ENCODE measurements at regions of chr1 and their contacts with region 1.

Region 1: DNA sequence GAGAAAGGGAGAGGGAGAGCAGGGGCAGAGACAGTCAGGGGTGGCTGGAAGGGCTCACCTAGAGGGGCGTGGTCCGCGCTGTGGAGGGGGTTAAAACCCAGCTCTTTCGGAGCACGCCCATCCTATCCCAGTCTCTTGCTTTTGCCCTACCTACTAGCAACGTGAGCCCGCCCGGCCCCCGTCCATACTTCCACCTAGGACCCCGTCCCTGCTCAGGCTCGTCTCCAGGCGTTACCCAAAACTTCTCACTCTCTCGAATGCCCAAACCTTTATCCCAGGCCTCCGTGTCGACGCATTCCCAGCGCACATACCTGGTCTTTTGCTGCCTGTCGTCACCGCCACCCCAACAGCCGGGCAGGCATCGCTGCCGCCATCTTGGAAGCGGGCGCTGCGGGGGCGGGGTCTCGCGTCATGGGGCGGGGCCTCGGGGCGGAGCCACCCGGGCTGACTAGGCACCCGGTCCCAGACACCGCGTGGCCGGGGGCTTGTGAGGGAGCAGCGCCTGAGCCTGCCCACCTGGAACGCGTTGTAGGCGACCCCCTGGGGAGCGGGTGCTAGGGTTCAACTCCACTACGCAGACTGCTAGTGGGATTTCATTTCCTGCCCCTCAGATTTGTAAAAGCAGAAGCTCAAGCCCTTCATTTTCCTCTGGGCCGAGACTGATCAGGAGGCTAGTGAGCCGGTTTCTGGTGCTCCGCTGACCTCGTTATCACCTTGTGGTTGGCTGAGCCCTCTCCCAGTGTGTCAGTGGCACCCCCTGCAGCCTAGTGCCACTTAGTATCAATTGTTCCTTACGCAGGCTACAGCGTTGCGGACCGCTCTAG is at the start of gene B4GALT3:
- DNase-seq: peak; percentile 94
- H3K4me3 Mint-ChIP-seq: peak within 1 kb of the TSS; percentile 97
- H3K27ac Mint-ChIP-seq: peak within 1 kb of the TSS; percentile 96
- H3K4me1 Mint-ChIP-seq: peaks cover 78% of the 10 kb centered on the region
- H3K27me3 Mint-ChIP-seq: no peaks in the 10 kb centered on the region
- total RNA-seq, gene B4GALT3: 55.0 to 56.7 TPM

Region 2: GRCh38 chr1:161192476-161193465 is 15.4 kb after region 1 on chr1:
- CTCF ChIA-PET with region 1: interaction called, 79 read pairs
- POLR2A ChIA-PET with region 1: interaction called, 23 read pairs
- DNase-seq: peak; percentile 77
- H3K4me3 Mint-ChIP-seq: no peak overlapping the region
- H3K27ac Mint-ChIP-seq: peak overlapping the region; percentile 56
- H3K4me1 Mint-ChIP-seq: peaks cover 53% of the 10 kb centered on the region
- H3K27me3 Mint-ChIP-seq: no peaks in the 10 kb centered on the region

Region 3: GRCh38 chr1:161244888-161245287 is 67.6 kb after region 1 on chr1:
- CTCF ChIA-PET with region 1: no interaction called
- POLR2A ChIA-PET with region 1: no interaction called
- DNase-seq: no peak
- H3K4me3 Mint-ChIP-seq: no peak overlapping the region
- H3K27ac Mint-ChIP-seq: no peak overlapping the region
- H3K4me1 Mint-ChIP-seq: no peaks in the 10 kb centered on the region
- H3K27me3 Mint-ChIP-seq: peaks cover 15% of the 10 kb centered on the region